Activated T-helper 2 cell treated with anti-CD3 and anti-CD28 coated beads, Interferon-gamma antibody, Interleukin-2, Interleukin-4, amounts not matched to agents 10 μg/mL and 5 μg/mL and 100 μg/mL, durations not matched to agents 14 hours and 24 hours and 36 hours (primary cell): ENCODE measurements at regions of chr3 and their contacts with region 1.

Region 1: DNA sequence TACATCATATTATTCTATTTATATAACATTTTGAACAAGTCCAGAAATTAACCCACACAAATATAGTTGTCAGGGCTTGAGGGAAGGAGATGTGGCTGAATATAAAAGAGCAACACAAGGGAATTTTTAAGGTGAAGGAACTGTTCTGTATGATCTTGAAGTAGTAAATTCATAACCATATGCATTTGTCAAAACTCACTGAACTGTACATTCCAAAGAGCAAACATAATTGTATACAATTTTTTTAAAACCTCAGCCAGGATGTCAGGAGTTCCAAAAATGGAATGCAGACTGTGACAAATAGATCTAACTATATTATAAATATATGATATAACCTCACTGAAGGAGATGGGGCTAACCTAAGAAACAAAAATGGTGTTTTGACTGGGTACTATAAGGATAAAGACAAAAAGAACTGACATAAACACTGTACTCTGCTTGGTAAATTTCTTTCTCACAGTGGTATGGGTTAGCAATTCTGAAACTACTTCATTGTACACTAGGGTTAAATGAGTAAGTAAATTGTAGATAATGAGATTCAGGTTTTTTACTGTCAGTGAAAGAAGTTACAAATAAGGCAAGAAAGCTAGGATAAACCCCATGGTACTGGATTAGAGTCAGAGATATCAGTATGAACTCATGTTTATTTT is 14.4 kb downstream of the GOLGB1 start:
- DNase-seq: no peak
- H3K4me3 Mint-ChIP-seq: no peak overlapping the region
- H3K27ac Mint-ChIP-seq: no peak overlapping the region
- H3K4me1 Mint-ChIP-seq: peaks cover 35% of the 10 kb centered on the region
- H3K27me3 Mint-ChIP-seq: no peaks in the 10 kb centered on the region

Region 2: DNA sequence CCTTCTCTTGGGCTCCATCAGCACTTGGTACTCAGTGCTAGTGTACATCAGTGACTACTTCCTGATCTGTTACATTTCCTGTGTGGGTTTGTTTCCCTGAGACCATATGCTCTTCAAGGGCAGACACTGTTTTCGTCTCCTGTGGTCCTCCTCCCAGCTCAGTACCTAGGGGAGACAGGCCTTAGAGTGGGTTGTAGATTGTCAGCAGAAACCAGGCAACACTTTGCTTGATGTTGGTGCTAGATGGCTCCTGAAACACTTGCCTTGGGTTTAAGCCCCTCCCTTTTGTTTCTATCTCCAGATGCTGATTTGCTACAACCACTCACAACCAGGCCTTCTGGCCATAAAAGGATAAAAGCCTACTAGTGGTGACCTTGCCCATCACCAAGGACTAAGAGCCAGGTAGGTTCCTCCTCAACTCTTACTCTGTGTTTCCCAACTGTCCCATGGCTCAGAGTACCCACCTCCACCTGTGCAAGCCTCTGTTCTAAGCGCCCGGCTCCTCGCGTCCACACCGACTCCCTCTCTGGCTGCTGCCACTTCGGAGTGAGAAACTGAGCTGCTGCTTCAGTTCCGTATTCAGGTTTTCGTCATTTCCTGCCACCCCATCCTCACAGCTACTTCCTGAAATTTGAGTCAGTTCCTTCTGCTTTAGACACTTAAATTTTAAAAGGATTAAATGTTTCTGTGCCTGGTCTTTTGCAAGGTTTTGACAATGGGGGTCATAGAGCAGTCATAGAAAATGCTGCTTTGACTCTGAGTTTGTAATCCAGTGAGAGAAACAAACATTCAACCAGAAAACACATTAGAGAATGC is 74.6 kb before region 1 on chr3 and contains the start of gene HCLS1:
- intact Hi-C with region 1: loop called (anchors 1 kb)
- DNase-seq: peak; percentile 72
- H3K4me3 Mint-ChIP-seq: peak within 1 kb of the TSS; percentile 97
- H3K27ac Mint-ChIP-seq: peak within 1 kb of the TSS; percentile 99
- H3K4me1 Mint-ChIP-seq: peaks cover 46% of the 10 kb centered on the region
- H3K27me3 Mint-ChIP-seq: no peaks in the 10 kb centered on the region
- total RNA-seq, gene HCLS1: 234 and 243 TPM in 2 replicates

Region 3: GRCh38 chr3:122146466-122146865 is 411.3 kb after region 1 on chr3:
- intact Hi-C with region 1: loop called (anchors 2 kb)
- DNase-seq: peak; percentile 56
- H3K4me3 Mint-ChIP-seq: no peak overlapping the region
- H3K27ac Mint-ChIP-seq: peak overlapping the region; percentile 46
- H3K4me1 Mint-ChIP-seq: peaks cover 31% of the 10 kb centered on the region
- H3K27me3 Mint-ChIP-seq: no peaks in the 10 kb centered on the region